ENCODE measurements at regions of chr20 and their contacts with region 1.

Region 1: GRCh38 chr20:815914-816606 is 17.5 kb upstream of the FAM110A start:
- DNase-seq: peak; percentile 72
- H3K4me3 Mint-ChIP-seq: no peak overlapping the region
- H3K27ac Mint-ChIP-seq: no peak overlapping the region
- H3K4me1 Mint-ChIP-seq: no peaks in the 10 kb centered on the region
- H3K27me3 Mint-ChIP-seq: peaks cover 31% of the 10 kb centered on the region
- CTCF ChIP-seq: peak; percentile 97

Region 2: DNA sequence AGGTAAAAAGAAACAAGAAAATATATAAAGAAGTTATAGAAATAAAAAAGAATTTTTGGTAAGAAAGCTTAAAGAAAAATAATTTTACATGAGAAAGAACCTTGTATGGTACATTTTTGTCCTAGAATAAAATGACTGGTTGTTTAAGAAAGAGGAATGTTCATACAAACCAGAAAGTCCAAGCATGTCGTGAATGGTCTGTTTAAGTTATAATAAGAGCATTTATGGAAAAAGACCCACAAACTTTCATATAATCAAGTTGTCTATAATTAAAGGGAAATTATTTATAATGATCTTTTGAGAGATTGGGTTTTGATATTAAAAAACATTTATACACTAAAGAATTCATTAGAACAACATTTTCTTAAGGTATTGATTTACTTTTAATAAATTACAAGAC is 10.3 kb before region 1 on chr20:
- CTCF ChIA-PET with region 1: interaction called, 21 read pairs
- POLR2A ChIA-PET with region 1: no interaction called
- intact Hi-C with region 1: no loop called
- DNase-seq: peak; percentile 25
- H3K4me3 Mint-ChIP-seq: no peak overlapping the region
- H3K27ac Mint-ChIP-seq: no peak overlapping the region
- H3K4me1 Mint-ChIP-seq: no peaks in the 10 kb centered on the region
- H3K27me3 Mint-ChIP-seq: peaks cover 15% of the 10 kb centered on the region
- CTCF ChIP-seq: no peak

Region 3: GRCh38 chr20:856361-857040 is 40.4 kb after region 1 on chr20:
- CTCF ChIA-PET with region 1: interaction called, 10 read pairs
- POLR2A ChIA-PET with region 1: interaction called, 4 read pairs
- intact Hi-C with region 1: no loop called
- DNase-seq: peak; percentile 99
- H3K4me3 Mint-ChIP-seq: peak overlapping the region; percentile 61
- H3K27ac Mint-ChIP-seq: peak overlapping the region; percentile 84
- H3K4me1 Mint-ChIP-seq: peaks cover 59% of the 10 kb centered on the region
- H3K27me3 Mint-ChIP-seq: no peaks in the 10 kb centered on the region
- CTCF ChIP-seq: no peak

Region 4: GRCh38 chr20:944774-945410 is 128.8 kb after region 1 on chr20:
- CTCF ChIA-PET with region 1: interaction called, 11 read pairs
- POLR2A ChIA-PET with region 1: no interaction called
- intact Hi-C with region 1: no loop called
- DNase-seq: no peak
- H3K4me3 Mint-ChIP-seq: no peak overlapping the region
- H3K27ac Mint-ChIP-seq: no peak overlapping the region
- H3K4me1 Mint-ChIP-seq: no peaks in the 10 kb centered on the region
- H3K27me3 Mint-ChIP-seq: peaks cover 58% of the 10 kb centered on the region
- CTCF ChIP-seq: no peak

Region 5: GRCh38 chr20:973785-974194 is 157.7 kb after region 1 on chr20:
- CTCF ChIA-PET with region 1: interaction called, 26 read pairs
- POLR2A ChIA-PET with region 1: interaction called, 3 read pairs
- intact Hi-C with region 1: loop called (anchors 5 kb)
- DNase-seq: peak; percentile 67
- H3K4me3 Mint-ChIP-seq: no peak overlapping the region
- H3K27ac Mint-ChIP-seq: no peak overlapping the region
- H3K4me1 Mint-ChIP-seq: peaks cover 8% of the 10 kb centered on the region
- H3K27me3 Mint-ChIP-seq: peaks cover 32% of the 10 kb centered on the region
- CTCF ChIP-seq: peak; percentile 48

Region 6: GRCh38 chr20:1212607-1213396 is 396.7 kb after region 1 on chr20:
- CTCF ChIA-PET with region 1: interaction called, 50 read pairs
- POLR2A ChIA-PET with region 1: no interaction called
- intact Hi-C with region 1: loop called (anchors 1 kb)
- DNase-seq: peak; percentile 74
- H3K4me3 Mint-ChIP-seq: no peak overlapping the region
- H3K27ac Mint-ChIP-seq: no peak overlapping the region
- H3K4me1 Mint-ChIP-seq: peaks cover 20% of the 10 kb centered on the region
- H3K27me3 Mint-ChIP-seq: peaks cover 58% of the 10 kb centered on the region
- CTCF ChIP-seq: peak; percentile 78